Activated B cell treated with CpG ODN at 0.5 μM for 24 hours (primary cell): ENCODE measurements at regions of chr5 and their contacts with region 1.

Region 1: DNA sequence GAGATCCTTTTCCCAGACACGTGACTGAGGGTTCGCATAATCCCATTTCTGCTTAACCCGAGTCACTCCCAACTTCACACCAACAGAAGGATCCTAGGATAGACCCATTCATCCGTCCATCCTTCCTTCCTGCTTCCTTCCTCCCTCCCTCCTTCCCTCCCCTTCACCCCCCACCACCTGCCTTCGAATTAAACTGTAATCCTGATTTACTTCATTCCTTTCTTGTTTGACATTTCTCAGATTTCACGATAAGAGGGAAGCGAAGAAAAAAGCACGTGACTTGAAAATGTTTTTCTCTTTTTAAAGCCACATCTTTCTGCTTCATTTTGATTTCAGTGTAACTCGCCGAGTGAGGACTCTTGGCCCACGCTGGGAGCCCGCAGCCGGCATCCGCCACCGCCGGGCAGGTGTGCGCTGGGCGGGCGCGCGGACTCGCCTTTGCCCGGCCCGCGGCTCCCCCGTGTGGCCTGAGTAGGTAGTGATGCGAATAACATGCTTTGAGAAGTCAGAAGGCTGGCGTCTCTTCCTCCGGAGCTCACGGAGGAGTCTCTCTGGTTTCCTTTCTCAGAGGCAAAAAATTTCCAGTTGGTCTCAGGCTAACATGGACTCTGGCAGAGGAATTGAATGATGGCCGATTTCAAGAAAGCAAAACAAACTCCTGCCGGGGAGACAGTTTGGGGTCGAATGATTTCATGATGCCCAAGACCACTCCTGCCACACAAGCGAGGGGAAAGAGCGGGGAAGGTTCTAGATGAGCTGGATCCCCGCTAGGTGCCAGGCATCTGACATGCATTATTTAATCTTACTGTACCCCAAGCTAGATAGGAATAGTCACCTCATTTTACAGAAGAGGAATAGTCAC is 117.7 kb downstream of the SLC12A2 start:
- DNase-seq: peak; percentile 70
- ATAC-seq: peak; percentile 99
- H3K4me3 Mint-ChIP-seq: peak overlapping the region; percentile 2
- H3K27ac Mint-ChIP-seq: no peak overlapping the region
- H3K4me1 Mint-ChIP-seq: peaks cover 12% of the 10 kb centered on the region
- H3K27me3 Mint-ChIP-seq: peaks cover 3% of the 10 kb centered on the region
- CTCF ChIP-seq: no peak

Region 2: GRCh38 chr5:126656396-126657007 is 1544.8 kb before region 1 on chr5:
- CTCF ChIA-PET with region 1: no interaction called
- POLR2A ChIA-PET with region 1: no interaction called
- intact Hi-C with region 1: loop called (anchors 2 kb)
- DNase-seq: no peak
- ATAC-seq: no peak
- H3K4me3 Mint-ChIP-seq: no peak overlapping the region
- H3K27ac Mint-ChIP-seq: no peak overlapping the region
- H3K4me1 Mint-ChIP-seq: peaks cover 6% of the 10 kb centered on the region
- H3K27me3 Mint-ChIP-seq: peaks cover 2% of the 10 kb centered on the region
- CTCF ChIP-seq: peak; percentile 51

Region 3: DNA sequence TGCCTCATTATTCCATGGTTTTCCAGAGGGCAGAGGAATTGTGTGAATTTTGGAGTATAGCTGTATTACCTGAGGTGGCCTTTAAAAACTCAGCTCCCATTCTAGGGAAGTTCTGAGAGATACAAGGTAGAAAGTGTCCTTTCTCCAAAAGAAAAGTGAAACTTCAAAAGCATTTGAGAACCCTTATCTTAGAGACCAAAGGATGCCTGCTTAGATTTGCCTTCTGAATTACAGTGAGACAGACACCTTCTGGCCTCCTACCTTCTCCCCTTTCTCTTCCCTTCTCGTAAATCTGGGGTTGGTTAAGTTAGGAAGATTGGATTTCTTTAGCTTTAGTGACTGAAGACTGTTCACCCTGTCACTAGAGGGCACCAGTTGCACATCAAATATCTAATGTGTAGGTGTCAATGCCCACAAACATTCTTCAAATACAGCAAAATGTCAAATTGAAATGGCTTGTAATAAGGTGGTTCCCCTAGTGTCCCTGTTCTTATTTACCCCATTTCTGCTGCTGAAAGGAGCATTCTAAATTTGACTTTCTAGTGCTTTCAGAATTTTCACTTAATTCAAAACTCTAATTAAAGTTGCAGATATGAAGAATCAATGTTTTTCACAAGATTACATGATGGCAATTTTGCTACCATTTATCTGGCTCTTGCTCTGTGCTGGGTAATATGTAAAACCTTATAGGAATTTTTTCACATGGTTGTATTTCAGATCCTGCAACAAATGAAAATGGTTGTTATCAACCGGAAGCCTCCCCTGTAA is 637.1 kb before region 1 on chr5:
- CTCF ChIA-PET with region 1: interaction called, 32 read pairs
- POLR2A ChIA-PET with region 1: no interaction called
- intact Hi-C with region 1: loop called (anchors 1 kb)
- DNase-seq: no peak
- ATAC-seq: peak; percentile 64
- H3K4me3 Mint-ChIP-seq: no peak overlapping the region
- H3K27ac Mint-ChIP-seq: no peak overlapping the region
- H3K4me1 Mint-ChIP-seq: peaks cover 3% of the 10 kb centered on the region
- H3K27me3 Mint-ChIP-seq: peaks cover 11% of the 10 kb centered on the region
- CTCF ChIP-seq: peak; percentile 38

Region 4: GRCh38 chr5:127746756-127747155 is 454.5 kb before region 1 on chr5:
- CTCF ChIA-PET with region 1: no interaction called
- POLR2A ChIA-PET with region 1: no interaction called
- intact Hi-C with region 1: loop called (anchors 1 kb)
- DNase-seq: no peak
- ATAC-seq: no peak
- H3K4me3 Mint-ChIP-seq: no peak overlapping the region
- H3K27ac Mint-ChIP-seq: no peak overlapping the region
- H3K4me1 Mint-ChIP-seq: no peaks in the 10 kb centered on the region
- H3K27me3 Mint-ChIP-seq: peaks cover 4% of the 10 kb centered on the region
- CTCF ChIP-seq: no peak

Region 5: GRCh38 chr5:127757576-127757975 is 443.7 kb before region 1 on chr5:
- CTCF ChIA-PET with region 1: interaction called, 4 read pairs
- POLR2A ChIA-PET with region 1: no interaction called
- intact Hi-C with region 1: loop called (anchors 1 kb)
- DNase-seq: no peak
- ATAC-seq: no peak
- H3K4me3 Mint-ChIP-seq: no peak overlapping the region
- H3K27ac Mint-ChIP-seq: no peak overlapping the region
- H3K4me1 Mint-ChIP-seq: no peaks in the 10 kb centered on the region
- H3K27me3 Mint-ChIP-seq: no peaks in the 10 kb centered on the region
- CTCF ChIP-seq: no peak

Region 6: GRCh38 chr5:127875235-127876021 is 325.9 kb before region 1 on chr5:
- CTCF ChIA-PET with region 1: interaction called, 9 read pairs
- POLR2A ChIA-PET with region 1: no interaction called
- intact Hi-C with region 1: loop called (anchors 1 kb)
- DNase-seq: no peak
- ATAC-seq: peak; percentile 42
- H3K4me3 Mint-ChIP-seq: no peak overlapping the region
- H3K27ac Mint-ChIP-seq: no peak overlapping the region
- H3K4me1 Mint-ChIP-seq: no peaks in the 10 kb centered on the region
- H3K27me3 Mint-ChIP-seq: peaks cover 2% of the 10 kb centered on the region
- CTCF ChIP-seq: no peak

Region 7: DNA sequence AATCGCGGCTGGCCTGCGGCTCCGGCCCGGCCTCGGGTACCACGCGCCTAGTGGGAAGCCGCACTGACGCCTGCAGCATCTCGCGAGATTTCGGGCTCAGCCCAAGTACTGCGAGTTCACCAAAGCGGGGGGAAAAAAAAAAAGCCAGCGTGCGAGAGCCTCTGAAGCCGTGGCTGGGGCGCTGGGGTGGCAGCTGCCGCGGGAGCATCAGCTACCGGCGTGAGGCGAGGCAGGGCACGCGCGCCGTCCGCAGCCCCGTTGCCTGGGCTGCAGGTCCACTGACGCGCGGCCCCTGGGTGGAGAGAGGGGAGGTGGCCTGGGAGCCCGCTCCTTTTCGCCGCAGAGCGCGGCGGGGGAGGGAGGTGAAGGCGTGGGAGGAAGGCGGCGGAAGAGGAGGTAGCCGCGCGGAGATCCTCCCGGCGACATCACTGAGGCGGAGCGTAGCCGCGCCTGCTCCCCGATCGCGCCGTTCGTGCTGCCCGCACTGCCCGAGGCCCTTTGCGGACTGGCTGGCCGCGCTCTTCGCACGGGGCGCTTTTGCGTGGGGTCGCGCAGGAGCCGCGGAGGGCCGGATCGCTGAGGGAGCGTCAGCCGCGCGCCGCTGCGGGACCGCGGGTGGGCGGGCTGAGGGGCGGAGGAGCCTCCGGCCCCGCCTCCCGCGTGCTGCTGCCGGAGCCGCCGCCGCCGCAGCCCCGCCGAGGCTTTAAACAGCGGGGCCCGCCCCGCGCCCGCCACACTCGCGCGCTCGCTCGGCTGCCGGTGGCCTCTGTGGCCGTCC is 118.1 kb before region 1 on chr5 and contains the start of gene SLC12A2:
- CTCF ChIA-PET with region 1: no interaction called
- POLR2A ChIA-PET with region 1: no interaction called
- intact Hi-C with region 1: loop called (anchors 1 kb)
- DNase-seq: peak; percentile 92
- ATAC-seq: peak; percentile 75
- H3K4me3 Mint-ChIP-seq: peak within 1 kb of the TSS; percentile 95
- H3K27ac Mint-ChIP-seq: peak within 1 kb of the TSS; percentile 97
- H3K4me1 Mint-ChIP-seq: peaks cover 72% of the 10 kb centered on the region
- H3K27me3 Mint-ChIP-seq: no peaks in the 10 kb centered on the region
- CTCF ChIP-seq: no peak
- total RNA-seq, gene SLC12A2: 19.9 and 20.6 TPM in 2 replicates

Region 8: DNA sequence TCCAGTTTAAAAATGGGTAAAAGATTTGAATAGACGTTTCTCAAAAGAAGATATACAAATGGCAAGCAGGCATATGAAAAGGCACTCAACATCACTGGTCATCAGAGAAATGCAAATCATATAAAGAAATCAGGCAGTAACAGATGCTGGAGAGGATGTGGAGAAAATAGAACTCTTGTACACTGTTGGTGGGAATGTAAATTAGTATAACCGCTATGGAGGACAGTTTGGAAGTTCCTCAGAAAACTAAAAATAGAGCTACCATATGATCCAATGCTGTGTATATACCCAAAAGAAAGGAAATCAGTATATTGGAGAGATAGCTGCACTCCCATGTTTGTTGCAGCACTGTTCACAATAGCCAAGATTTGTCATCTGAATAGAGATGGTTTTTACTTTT is 75.1 kb before region 1 on chr5:
- CTCF ChIA-PET with region 1: no interaction called
- POLR2A ChIA-PET with region 1: no interaction called
- intact Hi-C with region 1: no loop called
- DNase-seq: no peak
- ATAC-seq: no peak
- H3K4me3 Mint-ChIP-seq: no peak overlapping the region
- H3K27ac Mint-ChIP-seq: no peak overlapping the region
- H3K4me1 Mint-ChIP-seq: peaks cover 4% of the 10 kb centered on the region
- H3K27me3 Mint-ChIP-seq: no peaks in the 10 kb centered on the region
- CTCF ChIP-seq: no peak

Region 9: GRCh38 chr5:128163991-128164390 is 37.3 kb before region 1 on chr5:
- CTCF ChIA-PET with region 1: no interaction called
- POLR2A ChIA-PET with region 1: no interaction called
- intact Hi-C with region 1: no loop called
- DNase-seq: no peak
- ATAC-seq: no peak
- H3K4me3 Mint-ChIP-seq: no peak overlapping the region
- H3K27ac Mint-ChIP-seq: no peak overlapping the region
- H3K4me1 Mint-ChIP-seq: no peaks in the 10 kb centered on the region
- H3K27me3 Mint-ChIP-seq: no peaks in the 10 kb centered on the region
- CTCF ChIP-seq: no peak

Region 10: GRCh38 chr5:128213340-128213739 is 12.0 kb after region 1 on chr5:
- CTCF ChIA-PET with region 1: no interaction called
- POLR2A ChIA-PET with region 1: no interaction called
- intact Hi-C with region 1: no loop called
- DNase-seq: no peak
- ATAC-seq: no peak
- H3K4me3 Mint-ChIP-seq: no peak overlapping the region
- H3K27ac Mint-ChIP-seq: no peak overlapping the region
- H3K4me1 Mint-ChIP-seq: no peaks in the 10 kb centered on the region
- H3K27me3 Mint-ChIP-seq: no peaks in the 10 kb centered on the region
- CTCF ChIP-seq: no peak

Region 11: GRCh38 chr5:128318691-128319090 is 117.4 kb after region 1 on chr5:
- CTCF ChIA-PET with region 1: no interaction called
- POLR2A ChIA-PET with region 1: no interaction called
- intact Hi-C with region 1: no loop called
- DNase-seq: no peak
- ATAC-seq: no peak
- H3K4me3 Mint-ChIP-seq: no peak overlapping the region
- H3K27ac Mint-ChIP-seq: no peak overlapping the region
- H3K4me1 Mint-ChIP-seq: no peaks in the 10 kb centered on the region
- H3K27me3 Mint-ChIP-seq: no peaks in the 10 kb centered on the region
- CTCF ChIP-seq: no peak